B cell (primary cell): ENCODE measurements at regions of chr10 and their contacts with region 1.

Region 1: GRCh38 chr10:86971232-86971991 is 3.1 kb downstream of the ADIRF start:
- DNase-seq: peak; percentile 93
- ATAC-seq: peak; percentile 90
- H3K4me3 ChIP-seq: peak overlapping the region in 4 of 5 experiments; percentile 70 to 83 (median 76)
- H3K4me3 Mint-ChIP-seq: peak overlapping the region; percentile 91
- H3K27ac ChIP-seq: peak overlapping the region; percentile 80 to 86
- H3K27ac Mint-ChIP-seq: peak overlapping the region; percentile 87
- H3K4me1 ChIP-seq: peaks cover 29 to 40% of the 10 kb centered on the region in 2 donors
- H3K4me1 Mint-ChIP-seq: peaks cover 28% of the 10 kb centered on the region
- H3K27me3 ChIP-seq: peaks cover 0 to 33% (median 15%) of the 10 kb centered on the region in 4 experiments
- H3K27me3 Mint-ChIP-seq: peaks cover 7% of the 10 kb centered on the region
- CTCF ChIP-seq: peak; percentile 33

Region 2: GRCh38 chr10:86755740-86756510 is 215.5 kb before region 1 on chr10:
- CTCF ChIA-PET with region 1: no interaction called
- POLR2A ChIA-PET with region 1: no interaction called
- intact Hi-C with region 1: loop called (anchors 2 kb)
- DNase-seq: peak; percentile 86
- ATAC-seq: peak; percentile 91
- H3K4me3 ChIP-seq: peak overlapping the region; percentile 28 to 81 (median 71)
- H3K4me3 Mint-ChIP-seq: peak overlapping the region; percentile 90
- H3K27ac ChIP-seq: no peak overlapping the region
- H3K27ac Mint-ChIP-seq: peak overlapping the region; percentile 67
- H3K4me1 ChIP-seq: peaks cover 37 to 39% of the 10 kb centered on the region in 2 donors
- H3K4me1 Mint-ChIP-seq: peaks cover 44% of the 10 kb centered on the region
- H3K27me3 ChIP-seq: peaks cover 3 to 29% (median 23%) of the 10 kb centered on the region in 4 experiments
- H3K27me3 Mint-ChIP-seq: peaks cover 26% of the 10 kb centered on the region
- CTCF ChIP-seq: no peak

Region 3: DNA sequence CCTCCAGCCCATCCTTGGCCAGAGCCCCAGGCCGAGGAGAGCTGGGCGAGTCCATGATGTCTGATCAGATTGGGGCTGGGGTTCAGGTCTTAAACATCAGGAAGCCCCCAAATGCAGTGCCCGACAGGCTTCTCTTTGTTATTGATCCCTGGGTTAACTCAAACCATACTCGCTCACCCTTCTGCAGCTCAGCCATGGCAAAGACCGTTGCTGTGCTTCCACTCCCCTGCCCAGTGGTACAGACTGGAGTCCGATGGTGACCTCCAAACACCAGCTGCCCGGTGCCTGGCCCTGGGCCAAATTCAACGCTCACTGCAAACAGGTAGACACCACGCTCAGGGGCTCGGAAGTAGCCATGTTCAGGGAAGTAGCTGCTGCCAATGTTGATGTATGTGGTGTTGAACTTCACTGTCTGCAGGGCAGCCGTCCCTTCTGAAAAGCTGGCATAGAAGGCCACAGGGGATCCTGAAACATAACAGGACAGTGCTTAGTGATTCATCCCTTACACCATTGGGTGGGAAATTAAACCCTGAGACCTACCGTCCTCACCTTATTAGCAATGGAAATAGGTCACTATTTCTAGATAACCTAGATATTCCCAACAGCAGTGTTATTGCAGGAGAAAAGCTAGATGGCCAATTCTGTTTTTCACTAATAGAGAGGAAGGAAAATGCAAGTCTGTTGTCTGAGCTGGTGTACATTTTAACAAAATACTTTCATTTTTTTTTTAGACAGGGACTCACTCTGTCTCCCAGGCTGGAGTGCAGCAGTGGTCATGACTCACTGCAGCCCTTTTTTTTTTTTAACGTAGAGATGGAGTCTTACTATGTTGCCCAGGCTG is 34.5 kb before region 1 on chr10:
- CTCF ChIA-PET with region 1: interaction called, 19 read pairs
- POLR2A ChIA-PET with region 1: no interaction called
- intact Hi-C with region 1: loop called (anchors 1 kb)
- DNase-seq: no peak
- ATAC-seq: no peak
- H3K4me3 ChIP-seq: no peak overlapping the region
- H3K4me3 Mint-ChIP-seq: no peak overlapping the region
- H3K27ac ChIP-seq: no peak overlapping the region
- H3K27ac Mint-ChIP-seq: no peak overlapping the region
- H3K4me1 ChIP-seq: peaks cover 0 to 4% of the 10 kb centered on the region in 2 donors
- H3K4me1 Mint-ChIP-seq: no peaks in the 10 kb centered on the region
- H3K27me3 ChIP-seq: no peaks in the 10 kb centered on the region
- H3K27me3 Mint-ChIP-seq: no peaks in the 10 kb centered on the region
- CTCF ChIP-seq: no peak

Region 4: DNA sequence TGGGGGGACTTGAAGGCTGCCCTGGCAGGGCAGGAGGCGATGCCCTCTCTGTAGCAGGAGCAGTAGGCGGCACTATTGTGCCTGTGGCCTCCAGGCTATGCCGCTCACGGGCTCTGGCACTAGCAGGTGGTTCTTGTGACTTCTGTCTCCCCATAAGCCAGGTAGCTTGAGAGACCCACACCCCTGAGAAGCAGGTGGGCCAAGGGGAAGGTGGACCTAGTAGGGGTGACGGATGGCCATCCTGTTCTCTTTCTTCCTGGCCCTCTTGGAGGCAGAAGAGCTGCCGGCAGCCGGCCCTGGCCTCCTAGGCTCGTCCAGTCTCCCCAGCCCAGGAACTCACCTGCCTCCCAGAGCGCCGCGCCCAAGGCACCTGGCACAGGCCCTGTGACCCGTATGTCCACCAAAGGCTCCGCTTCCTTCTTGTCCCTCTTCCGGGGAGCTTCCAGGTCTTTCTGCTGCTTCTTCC is 29.4 kb before region 1 on chr10:
- CTCF ChIA-PET with region 1: interaction called, 19 read pairs
- POLR2A ChIA-PET with region 1: no interaction called
- intact Hi-C with region 1: loop called (anchors 1 kb)
- DNase-seq: no peak
- ATAC-seq: no peak
- H3K4me3 ChIP-seq: no peak overlapping the region
- H3K4me3 Mint-ChIP-seq: no peak overlapping the region
- H3K27ac ChIP-seq: no peak overlapping the region
- H3K27ac Mint-ChIP-seq: no peak overlapping the region
- H3K4me1 ChIP-seq: peaks cover 0 to 4% of the 10 kb centered on the region in 2 donors
- H3K4me1 Mint-ChIP-seq: no peaks in the 10 kb centered on the region
- H3K27me3 ChIP-seq: peaks cover 0 to 8% (median 0%) of the 10 kb centered on the region in 4 experiments
- H3K27me3 Mint-ChIP-seq: peaks cover 6% of the 10 kb centered on the region
- CTCF ChIP-seq: no peak

Region 5: GRCh38 chr10:86953747-86954680 is 17.4 kb before region 1 on chr10:
- CTCF ChIA-PET with region 1: no interaction called
- POLR2A ChIA-PET with region 1: no interaction called
- intact Hi-C with region 1: no loop called
- DNase-seq: no peak
- ATAC-seq: no peak
- H3K4me3 ChIP-seq: no peak overlapping the region
- H3K4me3 Mint-ChIP-seq: no peak overlapping the region
- H3K27ac ChIP-seq: no peak overlapping the region
- H3K27ac Mint-ChIP-seq: no peak overlapping the region
- H3K4me1 ChIP-seq: no peaks in the 10 kb centered on the region
- H3K4me1 Mint-ChIP-seq: no peaks in the 10 kb centered on the region
- H3K27me3 ChIP-seq: no peaks in the 10 kb centered on the region
- H3K27me3 Mint-ChIP-seq: no peaks in the 10 kb centered on the region
- CTCF ChIP-seq: no peak

Region 6: GRCh38 chr10:87094373-87095235 is 123.2 kb after region 1 on chr10 and contains the starts of genes GLUD1 and SHLD2:
- CTCF ChIA-PET with region 1: interaction called, 3 read pairs
- POLR2A ChIA-PET with region 1: interaction called, 10 read pairs
- intact Hi-C with region 1: loop called (anchors 1 kb)
- DNase-seq: peak; percentile 92
- ATAC-seq: peak; percentile 73
- H3K4me3 ChIP-seq: peak within 1 kb of the TSS; percentile 59 to 79 (median 78)
- H3K4me3 Mint-ChIP-seq: peak within 1 kb of the TSS; percentile 96
- H3K27ac ChIP-seq: peak within 1 kb of the TSS; percentile 86 to 93
- H3K27ac Mint-ChIP-seq: peak within 1 kb of the TSS; percentile 95
- H3K4me1 ChIP-seq: peaks cover 26 to 32% of the 10 kb centered on the region in 2 donors
- H3K4me1 Mint-ChIP-seq: peaks cover 51% of the 10 kb centered on the region
- H3K27me3 ChIP-seq: no peaks in the 10 kb centered on the region
- H3K27me3 Mint-ChIP-seq: no peaks in the 10 kb centered on the region
- CTCF ChIP-seq: no peak
- total RNA-seq, gene GLUD1: 71.5 and 81.0 TPM in 2 replicates
- total RNA-seq, gene SHLD2: 22.0 and 22.3 TPM in 2 replicates